Heart left ventricle (tissue), 16 donors: ENCODE measurements at regions of chr16 and their contacts with region 1.

Region 1: GRCh38 chr16:58336332-58337089 is 41.7 kb upstream of the PRSS54 start:
- DNase-seq: peak; percentile 71 to 88 (median 82)
- ATAC-seq: peak; percentile 52 to 81 (median 78)
- H3K4me3 ChIP-seq: peak overlapping the region in 10 of 12 donors; percentile 20 to 53 (median 38)
- H3K27ac ChIP-seq: peak overlapping the region in 10 of 12 donors; percentile 23 to 77 (median 58)
- H3K4me1 ChIP-seq: peaks cover 0 to 39% (median 25%) of the 10 kb centered on the region in 12 donors
- H3K27me3 ChIP-seq: no peaks in the 10 kb centered on the region
- CTCF ChIP-seq: peak; percentile 89 to 98 (median 94)
- POLR2A ChIP-seq: no peak

Region 2: DNA sequence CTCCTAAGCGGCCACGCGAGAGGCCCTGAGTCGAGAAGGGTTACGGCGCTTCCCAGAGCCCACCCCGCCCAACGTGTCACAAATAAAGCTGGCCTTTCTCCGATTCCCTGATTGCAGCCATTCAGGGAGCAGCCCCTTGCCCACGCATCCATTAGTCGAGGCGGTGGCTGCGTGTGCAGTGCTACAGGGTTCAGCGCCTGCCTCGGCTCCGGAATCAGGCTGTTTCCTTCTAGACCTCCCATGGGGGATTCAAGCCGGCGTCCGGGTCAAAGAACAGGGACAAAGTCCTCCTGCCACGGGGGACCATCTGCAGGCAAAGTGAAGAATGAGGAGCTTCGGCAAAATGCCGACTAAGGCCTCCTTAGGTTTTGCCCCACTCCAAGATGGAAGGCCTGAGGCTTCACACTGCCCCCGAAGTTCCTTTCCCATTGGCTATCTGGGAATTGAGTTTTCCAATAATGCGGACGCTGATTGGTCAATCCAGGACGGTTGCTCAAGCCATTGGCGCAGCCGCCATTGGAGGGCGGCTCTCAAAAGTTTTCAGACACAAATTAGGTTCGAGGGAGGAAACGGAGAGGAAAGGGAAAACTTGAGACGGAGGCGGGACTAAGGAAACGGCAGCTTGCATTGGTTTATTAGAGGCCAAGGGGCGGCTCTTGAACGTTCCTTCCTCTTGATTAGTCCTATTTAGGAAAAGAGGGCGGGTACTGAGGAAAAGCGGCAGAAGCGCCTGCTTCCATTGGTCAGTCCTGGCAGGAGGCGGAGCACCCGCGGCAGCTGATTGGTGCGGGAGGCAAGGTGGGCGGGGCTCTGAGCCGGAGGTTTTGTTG is 601.4 kb before region 1 on chr16:
- intact Hi-C with region 1: no loop called
- DNase-seq: peak; percentile 97 to 99 (median 98)
- ATAC-seq: peak; percentile 95 to 97 (median 96)
- H3K4me3 ChIP-seq: peak overlapping the region; percentile 56 to 98 (median 88)
- H3K27ac ChIP-seq: peak overlapping the region; percentile 68 to 96 (median 88)
- H3K4me1 ChIP-seq: peaks cover 0 to 26% (median 18%) of the 10 kb centered on the region in 12 donors
- H3K27me3 ChIP-seq: no peaks in the 10 kb centered on the region
- CTCF ChIP-seq: no peak
- POLR2A ChIP-seq: peak in 1 of 2 donors; percentile 40

Region 3: GRCh38 chr16:58392215-58393137 is 56.0 kb after region 1 on chr16 and contains the start of gene GINS3:
- intact Hi-C with region 1: loop called in 1 of 10 experiments (anchors 5 kb)
- DNase-seq: peak; percentile 92 to 94 (median 93)
- ATAC-seq: peak; percentile 94 to 99 (median 98)
- H3K4me3 ChIP-seq: peak within 1 kb of the TSS; percentile 66 to 96 (median 88)
- H3K27ac ChIP-seq: peak within 1 kb of the TSS; percentile 59 to 95 (median 87)
- H3K4me1 ChIP-seq: peaks cover 0 to 16% (median 9%) of the 10 kb centered on the region in 12 donors
- H3K27me3 ChIP-seq: no peaks in the 10 kb centered on the region
- CTCF ChIP-seq: no peak
- POLR2A ChIP-seq: peak in 1 of 2 donors; percentile 19
- total RNA-seq, gene GINS3: 3.9 to 8.7 (median 7.1) TPM

Region 4: GRCh38 chr16:58464916-58465731 is 128.6 kb after region 1 on chr16:
- intact Hi-C with region 1: loop called in 1 of 10 experiments (anchors 5 kb)
- DNase-seq: peak in 3 of 5 donors; percentile 55 to 65 (median 60)
- ATAC-seq: peak in 3 of 4 donors; percentile 16 to 56 (median 18)
- H3K4me3 ChIP-seq: peak overlapping the region; percentile 65 to 95 (median 83)
- H3K27ac ChIP-seq: peak overlapping the region; percentile 69 to 99 (median 93)
- H3K4me1 ChIP-seq: peaks cover 1 to 60% (median 20%) of the 10 kb centered on the region in 12 donors
- H3K27me3 ChIP-seq: peaks cover 0 to 62% (median 0%) of the 10 kb centered on the region in 9 donors
- CTCF ChIP-seq: peak in 8 of 12 donors; percentile 14 to 49 (median 30)
- POLR2A ChIP-seq: no peak

Region 5: DNA sequence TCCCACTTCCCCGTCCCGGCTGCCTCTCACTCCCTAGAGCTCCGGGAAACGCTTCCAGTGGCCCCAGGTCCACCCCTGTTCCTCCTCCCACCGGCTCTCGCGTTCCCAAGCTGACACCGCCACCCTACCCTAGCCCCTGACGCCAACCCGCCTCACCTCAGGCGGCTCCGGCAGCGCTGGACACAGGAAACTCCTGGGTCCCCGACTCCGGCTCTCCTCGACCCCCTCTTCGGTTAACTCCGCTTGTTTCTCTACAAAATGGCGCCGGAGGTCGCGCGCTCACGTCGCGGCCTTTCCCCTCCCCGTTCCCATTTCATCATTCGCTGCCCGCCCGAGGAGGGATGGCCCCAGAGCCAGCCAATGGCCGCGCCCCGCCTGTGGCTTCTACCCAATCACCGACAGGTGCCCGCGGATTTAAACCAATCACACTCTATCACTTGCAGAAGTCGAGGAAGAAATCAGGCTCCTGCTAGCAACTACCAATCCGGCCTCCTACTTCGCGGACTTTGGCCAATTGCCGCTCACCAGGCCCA is 293.1 kb after region 1 on chr16 and contains the start of gene CNOT1:
- intact Hi-C with region 1: loop called in 5 of 10 experiments (anchors 5 to 10 kb)
- DNase-seq: peak; percentile 98 to 99 (median 98)
- ATAC-seq: peak; percentile 93 to 96 (median 96)
- H3K4me3 ChIP-seq: peak within 1 kb of the TSS; percentile 66 to 99 (median 88)
- H3K27ac ChIP-seq: peak within 1 kb of the TSS; percentile 95 to 100 (median 98)
- H3K4me1 ChIP-seq: peaks cover 0 to 38% (median 23%) of the 10 kb centered on the region in 12 donors
- H3K27me3 ChIP-seq: no peaks in the 10 kb centered on the region
- CTCF ChIP-seq: no peak
- POLR2A ChIP-seq: peak in 1 of 2 donors; percentile 81
- total RNA-seq, gene CNOT1: 66.6 to 110 (median 82.5) TPM

Region 6: GRCh38 chr16:58661199-58661830 is 324.8 kb after region 1 on chr16:
- intact Hi-C with region 1: loop called in 5 of 10 experiments (anchors 5 to 10 kb)
- DNase-seq: peak in 4 of 5 donors; percentile 43 to 78 (median 56)
- ATAC-seq: peak; percentile 78 to 92 (median 86)
- H3K4me3 ChIP-seq: no peak overlapping the region
- H3K27ac ChIP-seq: no peak overlapping the region
- H3K4me1 ChIP-seq: peaks cover 0 to 6% (median 0%) of the 10 kb centered on the region in 12 donors
- H3K27me3 ChIP-seq: no peaks in the 10 kb centered on the region
- CTCF ChIP-seq: peak; percentile 35 to 71 (median 58)
- POLR2A ChIP-seq: no peak

Region 7: GRCh38 chr16:58755989-58756649 is 419.6 kb after region 1 on chr16:
- intact Hi-C with region 1: loop called in 2 of 10 experiments (anchors 10 kb)
- DNase-seq: peak; percentile 57 to 75 (median 69)
- ATAC-seq: peak; percentile 84 to 96 (median 91)
- H3K4me3 ChIP-seq: peak overlapping the region in 1 of 12 donors; percentile 11
- H3K27ac ChIP-seq: peak overlapping the region in 1 of 12 donors; percentile 28
- H3K4me1 ChIP-seq: peaks cover 0 to 9% (median 0%) of the 10 kb centered on the region in 12 donors
- H3K27me3 ChIP-seq: no peaks in the 10 kb centered on the region
- CTCF ChIP-seq: peak in 11 of 12 donors; percentile 49 to 79 (median 64)
- POLR2A ChIP-seq: no peak